ENCODE measurements at regions of chr13 and their contacts with region 1.

Region 1: GRCh38 chr13:42354241-42355091 is 82.5 kb downstream of the AKAP11 start:
- DNase-seq: peak; percentile 64
- H3K4me3 Mint-ChIP-seq: no peak overlapping the region
- H3K27ac Mint-ChIP-seq: peak overlapping the region; percentile 89
- H3K4me1 Mint-ChIP-seq: peaks cover 60% of the 10 kb centered on the region
- H3K27me3 Mint-ChIP-seq: no peaks in the 10 kb centered on the region

Region 2: GRCh38 chr13:42377640-42378382 is 23.3 kb after region 1 on chr13:
- CTCF ChIA-PET with region 1: interaction called, 3 read pairs
- POLR2A ChIA-PET with region 1: interaction called, 13 read pairs
- DNase-seq: peak; percentile 55
- H3K4me3 Mint-ChIP-seq: no peak overlapping the region
- H3K27ac Mint-ChIP-seq: peak overlapping the region; percentile 90
- H3K4me1 Mint-ChIP-seq: peaks cover 70% of the 10 kb centered on the region
- H3K27me3 Mint-ChIP-seq: no peaks in the 10 kb centered on the region